GM23248 (cell line): ENCODE measurements at regions of chr2 and their contacts with region 1.

Region 1: GRCh38 chr2:191066197-191066918 is 52.4 kb upstream of the STAT1 start:
- DNase-seq: no peak
- H3K4me3 ChIP-seq: no peak overlapping the region
- H3K27ac ChIP-seq: no peak overlapping the region
- H3K4me1 ChIP-seq: peaks cover 10% of the 10 kb centered on the region
- H3K27me3 ChIP-seq: no peaks in the 10 kb centered on the region

Region 2: DNA sequence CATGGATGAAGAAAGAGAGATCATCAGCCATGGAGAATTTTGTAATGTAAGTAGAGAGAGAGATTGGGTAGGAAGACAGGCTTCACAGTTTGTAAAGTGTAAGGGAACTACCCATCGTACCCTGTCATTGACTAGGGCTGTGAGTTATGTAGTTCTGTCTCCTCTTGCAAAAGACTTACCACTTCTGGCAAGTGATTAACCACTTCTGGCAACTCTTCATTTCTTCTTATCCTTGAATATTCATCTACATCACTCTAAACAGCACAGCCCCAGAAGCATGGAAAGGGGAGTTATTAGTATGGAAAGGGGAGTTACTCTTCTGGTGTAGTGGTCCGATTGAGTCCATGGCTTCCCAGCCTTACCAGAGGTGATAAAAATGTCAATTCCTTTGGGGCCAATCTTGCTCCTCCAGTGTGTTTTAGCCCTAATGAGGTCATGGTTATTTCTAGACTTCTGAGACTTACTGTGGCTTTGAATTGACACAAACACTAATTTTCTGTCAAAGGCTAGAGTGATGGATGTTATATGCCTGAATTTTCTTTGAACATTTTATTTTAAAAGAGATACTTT is 104.4 kb before region 1 on chr2:
- in situ Hi-C with region 1: no loop called
- DNase-seq: peak; percentile 62
- H3K4me3 ChIP-seq: no peak overlapping the region
- H3K27ac ChIP-seq: peak overlapping the region; percentile 53
- H3K4me1 ChIP-seq: peaks cover 15% of the 10 kb centered on the region; the same call in 1 of the 2 replicates
- H3K27me3 ChIP-seq: no peaks in the 10 kb centered on the region

Region 3: GRCh38 chr2:191144217-191144616 is 77.9 kb after region 1 on chr2:
- in situ Hi-C with region 1: loop called (anchors 5 kb)
- DNase-seq: no peak
- H3K4me3 ChIP-seq: no peak overlapping the region
- H3K27ac ChIP-seq: no peak overlapping the region
- H3K4me1 ChIP-seq: no peaks in the 10 kb centered on the region
- H3K27me3 ChIP-seq: no peaks in the 10 kb centered on the region